IMR-90 (cell line): ENCODE measurements at regions of chr2 and their contacts with region 1.

Region 1: GRCh38 chr2:72629062-72629461 is 196.8 kb downstream of the EXOC6B start:
- DNase-seq: peak; percentile 56
- ATAC-seq: peak; percentile 79
- H3K4me3 ChIP-seq: no peak overlapping the region
- H3K27ac ChIP-seq: no peak overlapping the region
- H3K4me1 ChIP-seq: no peaks in the 10 kb centered on the region
- H3K27me3 ChIP-seq: no peaks in the 10 kb centered on the region
- CTCF ChIP-seq: no peak
- POLR2A ChIP-seq: no peak
- RAD21 ChIP-seq: no peak

Region 2: GRCh38 chr2:72579591-72580180 is 49.4 kb before region 1 on chr2:
- CTCF ChIA-PET with region 1: no interaction called
- POLR2A ChIA-PET with region 1: no interaction called
- dilution Hi-C with region 1: no loop called
- in situ Hi-C with region 1: no loop called
- intact Hi-C with region 1: no loop called
- DNase-seq: peak; percentile 64
- ATAC-seq: peak; percentile 65
- H3K4me3 ChIP-seq: no peak overlapping the region
- H3K27ac ChIP-seq: no peak overlapping the region
- H3K4me1 ChIP-seq: peaks cover 2% of the 10 kb centered on the region; the same call in 1 of the 2 replicates
- H3K27me3 ChIP-seq: no peaks in the 10 kb centered on the region
- CTCF ChIP-seq: peak; percentile 75
- POLR2A ChIP-seq: no peak
- RAD21 ChIP-seq: peak; percentile 85

Region 3: GRCh38 chr2:72719416-72719815 is 90.4 kb after region 1 on chr2:
- CTCF ChIA-PET with region 1: no interaction called
- POLR2A ChIA-PET with region 1: no interaction called
- dilution Hi-C with region 1: no loop called
- in situ Hi-C with region 1: no loop called
- intact Hi-C with region 1: loop called (anchors 5 kb)
- DNase-seq: peak; percentile 49
- ATAC-seq: no peak
- H3K4me3 ChIP-seq: no peak overlapping the region
- H3K27ac ChIP-seq: peak overlapping the region; percentile 48; the same call in 1 of the 2 replicates
- H3K4me1 ChIP-seq: peaks cover 11% of the 10 kb centered on the region
- H3K27me3 ChIP-seq: no peaks in the 10 kb centered on the region
- CTCF ChIP-seq: no peak
- POLR2A ChIP-seq: no peak
- RAD21 ChIP-seq: no peak